ENCODE measurements at regions of chr10 and their contacts with region 1.

Region 1: GRCh38 chr10:114304017-114304570 is 65.0 kb downstream of the VWA2 start:
- DNase-seq: peak; percentile 91
- H3K4me3 ChIP-seq: peak overlapping the region in 1 of 3 experiments; percentile 12
- H3K27ac ChIP-seq: no peak overlapping the region
- H3K4me1 ChIP-seq: peaks cover 8% of the 10 kb centered on the region
- H3K27me3 ChIP-seq: peaks cover 2 to 10% of the 10 kb centered on the region in 2 experiments
- CTCF ChIP-seq: peak; percentile 77 to 87
- POLR2A ChIP-seq: no peak

Region 2: DNA sequence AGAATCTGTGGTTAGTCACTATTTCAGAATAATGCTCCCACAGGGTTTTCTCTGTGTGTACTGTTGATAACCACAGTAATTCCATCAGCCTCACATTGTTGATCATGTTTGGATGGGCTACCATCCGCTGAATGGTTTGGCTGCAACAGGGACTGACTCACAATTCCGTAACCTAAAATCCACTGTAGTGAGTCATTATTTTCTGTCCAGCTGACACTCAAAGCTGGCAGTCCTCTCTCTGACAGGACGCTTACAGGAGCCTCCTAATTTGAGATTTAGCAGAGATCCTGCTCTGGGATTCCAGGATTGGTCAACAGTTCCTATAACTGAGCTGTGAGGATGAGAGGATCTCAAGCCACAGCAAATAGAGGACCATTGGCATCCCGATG is 32.3 kb before region 1 on chr10:
- CTCF ChIA-PET with region 1: interaction called, 14 read pairs
- POLR2A ChIA-PET with region 1: no interaction called
- dilution Hi-C with region 1: no loop called
- intact Hi-C with region 1: no loop called
- DNase-seq: peak; percentile 76
- H3K4me3 ChIP-seq: no peak overlapping the region
- H3K27ac ChIP-seq: no peak overlapping the region
- H3K4me1 ChIP-seq: peaks cover 7% of the 10 kb centered on the region
- H3K27me3 ChIP-seq: no peaks in the 10 kb centered on the region
- CTCF ChIP-seq: no peak
- POLR2A ChIP-seq: no peak

Region 3: GRCh38 chr10:114388275-114388674 is 84.2 kb after region 1 on chr10:
- CTCF ChIA-PET with region 1: interaction called, 22 read pairs
- POLR2A ChIA-PET with region 1: no interaction called
- dilution Hi-C with region 1: no loop called
- intact Hi-C with region 1: no loop called
- DNase-seq: no peak
- H3K4me3 ChIP-seq: no peak overlapping the region
- H3K27ac ChIP-seq: no peak overlapping the region
- H3K4me1 ChIP-seq: peaks cover 31% of the 10 kb centered on the region
- H3K27me3 ChIP-seq: peaks cover 2% of the 10 kb centered on the region in 2 experiments
- CTCF ChIP-seq: no peak
- POLR2A ChIP-seq: no peak

Region 4: DNA sequence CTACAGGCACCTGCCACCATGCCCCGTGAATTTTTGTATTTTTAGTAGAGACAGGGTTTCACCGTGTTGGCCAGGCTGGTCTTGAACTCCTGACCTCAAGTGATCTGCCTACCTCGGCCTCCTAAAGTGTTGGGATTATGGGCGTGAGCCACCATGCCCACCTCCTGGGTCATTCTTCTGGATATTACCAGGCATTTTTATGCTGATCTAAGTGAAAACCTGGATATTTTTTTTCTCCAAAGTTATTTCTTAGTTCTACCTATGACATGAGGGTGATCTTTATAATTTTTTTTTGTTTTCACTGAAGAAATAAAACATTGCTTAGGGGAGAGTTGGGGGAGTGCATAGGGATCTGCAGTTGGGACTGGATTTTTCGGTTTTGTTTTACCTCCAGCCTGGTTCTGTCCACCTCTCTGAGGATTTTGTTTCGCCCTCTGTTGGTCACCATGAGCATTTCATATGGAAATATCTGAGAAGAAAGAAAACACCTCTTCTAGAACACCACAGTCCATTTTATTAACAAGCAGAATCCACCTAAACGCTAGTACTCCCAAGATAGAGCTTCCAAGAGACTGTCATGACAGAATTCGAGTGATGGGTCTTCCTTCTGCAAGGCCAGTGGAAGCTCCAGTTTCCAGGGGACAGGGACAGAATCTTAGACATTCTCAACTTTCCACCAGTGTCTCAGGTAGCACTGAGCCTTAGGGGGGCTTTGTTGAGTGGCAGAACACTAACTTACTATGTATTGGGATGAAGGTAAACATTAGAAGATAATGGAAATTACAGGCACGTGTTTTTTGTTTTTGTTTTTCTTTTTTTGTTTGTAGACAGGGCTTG is 133.6 kb after region 1 on chr10:
- CTCF ChIA-PET with region 1: interaction called, 85 read pairs
- POLR2A ChIA-PET with region 1: no interaction called
- dilution Hi-C with region 1: no loop called
- intact Hi-C with region 1: loop called (anchors 1 kb)
- DNase-seq: no peak
- H3K4me3 ChIP-seq: no peak overlapping the region
- H3K27ac ChIP-seq: no peak overlapping the region
- H3K4me1 ChIP-seq: no peaks in the 10 kb centered on the region
- H3K27me3 ChIP-seq: no peaks in the 10 kb centered on the region
- CTCF ChIP-seq: peak; percentile 34 to 41
- POLR2A ChIP-seq: no peak

Region 5: DNA sequence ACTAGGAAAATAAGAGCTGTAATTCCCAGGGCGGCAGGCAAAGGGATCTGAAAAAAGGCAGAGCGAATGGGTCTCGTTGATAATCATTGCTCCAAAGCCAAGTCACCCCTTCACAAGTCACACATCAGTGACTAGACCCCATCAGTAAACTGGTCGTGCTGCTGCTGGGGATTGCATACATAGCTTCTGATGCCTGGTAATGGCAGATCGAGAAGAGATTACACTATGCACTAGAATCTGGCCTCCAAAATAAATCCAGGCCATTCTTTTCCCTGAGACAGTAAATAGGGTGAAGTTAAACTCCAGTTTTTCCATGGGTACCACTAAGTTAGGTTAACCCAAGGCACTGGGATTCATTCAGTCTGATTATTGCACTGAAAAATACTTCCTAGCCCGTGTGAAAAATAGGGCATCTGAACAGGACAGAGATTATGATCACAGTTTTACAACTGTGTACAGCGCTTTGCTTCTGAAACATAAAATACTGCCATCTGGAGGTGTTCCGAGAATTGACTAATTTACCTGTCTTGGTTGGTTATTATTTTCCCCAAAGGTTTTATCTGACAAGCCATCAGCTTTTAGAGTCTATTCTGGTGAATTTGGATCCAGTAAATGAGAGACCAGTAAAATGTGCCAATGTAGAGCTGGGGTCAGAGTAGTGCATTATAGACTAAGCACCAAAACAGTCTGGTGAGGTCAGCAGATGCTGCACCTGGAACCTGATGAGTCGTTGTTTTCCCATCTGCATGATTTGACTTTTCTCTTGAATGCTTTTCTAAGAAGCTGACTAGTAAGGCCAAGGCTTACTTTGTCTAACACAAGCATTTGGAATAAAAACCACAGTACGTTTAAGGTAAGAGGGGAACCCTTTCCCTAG is 183.1 kb after region 1 on chr10:
- CTCF ChIA-PET with region 1: interaction called, 14 read pairs
- POLR2A ChIA-PET with region 1: no interaction called
- dilution Hi-C with region 1: no loop called
- intact Hi-C with region 1: no loop called
- DNase-seq: peak; percentile 86
- H3K4me3 ChIP-seq: no peak overlapping the region
- H3K27ac ChIP-seq: peak overlapping the region; percentile 19
- H3K4me1 ChIP-seq: peaks cover 25% of the 10 kb centered on the region
- H3K27me3 ChIP-seq: no peaks in the 10 kb centered on the region
- CTCF ChIP-seq: no peak
- POLR2A ChIP-seq: no peak

Region 6: DNA sequence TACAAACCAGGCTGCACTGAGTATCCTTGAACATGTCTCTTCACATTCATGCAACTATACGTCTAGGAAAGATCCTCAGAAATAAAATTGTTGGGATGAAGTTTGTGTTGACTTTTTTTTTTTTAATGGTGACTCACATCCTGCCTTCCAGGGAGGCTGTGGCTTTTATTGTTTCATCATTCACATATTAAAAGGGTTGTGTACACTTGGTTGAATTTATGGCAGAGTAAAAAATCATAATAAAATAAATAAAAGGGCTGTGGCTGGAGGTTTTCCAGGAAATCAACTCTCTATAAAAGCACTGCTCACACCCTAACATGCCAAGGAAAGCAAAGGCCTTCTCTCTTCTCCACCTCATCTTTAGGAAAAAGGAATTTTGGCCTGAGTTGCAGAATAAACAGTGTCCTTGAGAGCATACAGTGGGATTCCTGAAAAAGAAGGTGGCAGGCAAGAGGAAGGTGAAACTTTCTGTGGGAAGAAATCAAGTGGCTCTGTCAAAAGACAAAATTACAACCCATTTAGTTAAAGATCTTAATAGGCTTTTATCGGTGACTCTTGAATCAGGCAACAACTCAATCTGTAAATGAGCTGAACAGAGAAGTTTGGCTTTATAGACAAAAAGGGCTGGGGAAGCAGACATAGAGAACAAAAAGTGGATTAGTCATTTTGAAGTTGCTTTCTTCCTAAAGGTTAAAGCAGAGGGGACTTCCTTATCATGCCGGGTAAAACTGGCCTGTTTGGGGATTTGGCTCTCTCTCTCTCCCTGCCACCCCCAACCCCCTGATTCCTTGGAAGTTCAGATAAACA is 475.9 kb after region 1 on chr10:
- CTCF ChIA-PET with region 1: interaction called, 32 read pairs
- POLR2A ChIA-PET with region 1: no interaction called
- dilution Hi-C with region 1: no loop called
- intact Hi-C with region 1: no loop called
- DNase-seq: peak; percentile 97
- H3K4me3 ChIP-seq: no peak overlapping the region
- H3K27ac ChIP-seq: peak overlapping the region; percentile 91
- H3K4me1 ChIP-seq: peaks cover 21% of the 10 kb centered on the region
- H3K27me3 ChIP-seq: no peaks in the 10 kb centered on the region
- CTCF ChIP-seq: no peak
- POLR2A ChIP-seq: no peak

Measured in endothelial cell of umbilical vein (primary cell).